Esophagus squamous epithelium (tissue), 5 donors: ENCODE measurements at regions of chr4 and their contacts with region 1.

Region 1: GRCh38 chr4:149897783-149898182 is 82.1 kb upstream of the IQCM start:
- DNase-seq: no peak
- H3K4me3 ChIP-seq: no peak overlapping the region
- H3K27ac ChIP-seq: no peak overlapping the region
- H3K4me1 ChIP-seq: no peaks in the 10 kb centered on the region
- H3K27me3 ChIP-seq: no peaks in the 10 kb centered on the region
- CTCF ChIP-seq: peak in 5 of 6 experiments; percentile 7 to 56 (median 14)
- POLR2A ChIP-seq: no peak

Region 2: DNA sequence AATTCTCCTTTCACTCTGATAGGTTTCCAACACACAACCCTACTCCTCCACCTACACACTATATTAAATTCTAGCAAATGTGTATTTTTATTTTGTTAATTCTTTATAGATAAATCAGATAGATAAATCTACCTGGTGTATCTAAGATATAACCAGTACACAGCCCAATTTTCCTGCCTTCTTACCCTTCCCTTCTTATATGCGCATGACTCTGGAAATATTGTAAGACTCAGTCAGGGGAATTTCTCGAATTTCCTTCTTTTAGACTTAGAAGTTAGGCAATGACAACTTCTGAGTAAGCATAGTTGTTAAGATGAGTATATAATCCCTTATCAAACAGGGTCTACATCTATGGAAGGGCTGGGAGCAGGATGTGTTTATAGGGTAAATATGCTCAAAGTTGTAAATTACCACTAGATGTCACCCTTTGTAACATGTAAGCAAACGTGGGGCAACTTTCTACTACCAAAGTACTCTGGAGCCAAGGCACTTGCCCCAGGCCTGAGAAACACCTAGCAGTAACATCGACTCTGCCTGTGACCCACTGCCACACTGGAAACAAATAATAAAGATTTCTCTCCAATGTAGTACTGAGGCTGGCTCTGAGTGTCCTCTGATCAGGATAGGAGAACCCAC is 526.9 kb before region 1 on chr4:
- intact Hi-C with region 1: loop called (anchors 10 kb)
- DNase-seq: no peak
- H3K4me3 ChIP-seq: no peak overlapping the region
- H3K27ac ChIP-seq: no peak overlapping the region
- H3K4me1 ChIP-seq: no peaks in the 10 kb centered on the region
- H3K27me3 ChIP-seq: no peaks in the 10 kb centered on the region
- CTCF ChIP-seq: peak in 4 of 6 experiments; percentile 14 to 49 (median 30)
- POLR2A ChIP-seq: no peak